Head of caudate nucleus (tissue), 42 donors: ENCODE measurements at regions of chr5 and their contacts with region 1.

Region 1: GRCh38 chr5:169778622-169779596 is 141.8 kb downstream of the DOCK2 start:
- DNase-seq: no peak

Region 2: DNA sequence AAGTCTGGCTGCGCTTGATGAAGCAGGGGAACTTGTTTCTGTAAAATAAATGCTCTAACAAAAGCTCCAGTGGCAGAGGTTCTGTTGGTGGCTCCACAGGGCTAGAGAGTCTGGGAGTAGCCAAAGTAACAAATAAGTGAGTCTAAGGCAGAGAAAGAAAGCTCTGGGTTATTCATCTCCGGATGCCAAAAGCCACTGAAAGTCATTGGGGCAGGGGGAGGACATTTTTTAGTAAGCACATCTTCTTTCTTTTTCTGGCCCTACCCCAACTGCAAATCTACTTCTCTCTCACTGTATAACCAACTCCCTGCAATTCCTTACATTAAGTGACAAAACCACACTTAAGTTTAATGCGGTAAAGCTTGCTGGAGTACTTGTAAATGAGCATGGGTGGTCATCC is 59.8 kb after region 1 on chr5:
- intact Hi-C with region 1: loop called (anchors 10 kb)
- DNase-seq: no peak